WTC11 (cell line): ENCODE measurements at regions of chr1 and their contacts with region 1.

Region 1: GRCh38 chr1:23634842-23635651 is 56.6 kb upstream of the RPL11 start:
- DNase-seq: peak; percentile 61
- ATAC-seq: peak; percentile 70
- H3K4me3 Mint-ChIP-seq: no peak overlapping the region
- H3K27ac Mint-ChIP-seq: peak overlapping the region; percentile 13; the same call in 1 of the 2 replicates
- H3K4me1 Mint-ChIP-seq: peaks cover 28% of the 10 kb centered on the region
- H3K27me3 Mint-ChIP-seq: no peaks in the 10 kb centered on the region; the same call in 1 of the 2 replicates
- CTCF ChIP-seq: peak; percentile 82

Region 2: DNA sequence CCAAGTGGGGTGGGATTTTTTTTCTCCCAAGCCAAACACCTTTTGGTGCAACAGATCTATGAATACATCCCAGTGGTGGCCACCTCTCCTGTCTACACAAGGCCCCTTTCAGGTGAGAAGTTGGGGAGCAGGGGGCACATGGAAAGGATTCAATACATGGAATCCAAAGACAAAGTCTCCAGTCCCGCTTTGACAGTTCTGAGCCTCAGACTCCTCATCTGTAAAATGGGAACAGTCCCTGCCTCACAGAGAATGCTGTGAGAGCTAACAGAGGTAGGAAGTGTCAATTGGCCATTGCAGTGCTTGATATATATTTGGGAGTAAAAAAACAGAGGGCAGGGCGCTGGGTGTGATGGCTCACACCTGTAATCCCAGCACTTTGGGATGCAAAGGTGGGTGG is 238.7 kb before region 1 on chr1:
- CTCF ChIA-PET with region 1: no interaction called
- POLR2A ChIA-PET with region 1: no interaction called
- DNase-seq: no peak
- ATAC-seq: no peak
- H3K4me3 Mint-ChIP-seq: no peak overlapping the region
- H3K27ac Mint-ChIP-seq: no peak overlapping the region
- H3K4me1 Mint-ChIP-seq: peaks cover 19% of the 10 kb centered on the region
- H3K27me3 Mint-ChIP-seq: no peaks in the 10 kb centered on the region
- CTCF ChIP-seq: no peak

Region 3: DNA sequence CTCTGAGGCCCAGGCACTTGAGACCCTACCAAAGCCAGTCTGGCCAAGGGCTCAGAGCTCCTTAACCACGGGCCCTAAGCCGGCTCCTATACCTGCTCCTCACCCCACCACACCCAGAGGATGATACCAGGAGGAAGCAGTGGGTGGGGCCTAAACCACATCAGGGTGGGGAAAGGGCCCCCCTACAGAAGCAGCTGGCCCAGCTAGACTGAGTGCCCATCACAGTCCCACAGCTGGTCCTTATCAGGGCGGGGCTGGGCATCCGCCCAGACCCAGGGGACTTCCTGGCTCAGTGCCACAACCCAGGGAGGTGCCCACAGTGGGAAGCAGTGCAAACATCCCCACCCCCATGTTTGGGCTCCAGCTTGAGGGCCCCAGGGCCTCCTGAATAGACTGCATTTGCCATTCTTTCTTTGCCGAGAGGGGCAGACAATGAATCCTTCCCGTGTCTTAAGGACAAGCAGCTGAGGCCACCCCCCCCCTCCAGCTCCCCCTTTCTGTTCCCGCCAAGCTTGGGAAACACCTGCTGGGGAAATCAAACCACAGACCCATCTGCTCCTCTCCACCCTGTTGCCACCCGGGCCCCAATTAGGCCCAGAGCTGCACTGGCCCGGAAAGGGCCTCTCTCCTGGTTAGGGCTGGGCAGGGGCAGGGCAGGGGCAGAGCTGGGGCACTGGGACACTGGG is 110.2 kb before region 1 on chr1:
- CTCF ChIA-PET with region 1: interaction called, 19 read pairs
- POLR2A ChIA-PET with region 1: no interaction called
- DNase-seq: no peak
- ATAC-seq: no peak; the same call in 1 of the 2 replicates
- H3K4me3 Mint-ChIP-seq: no peak overlapping the region
- H3K27ac Mint-ChIP-seq: no peak overlapping the region
- H3K4me1 Mint-ChIP-seq: peaks cover 15% of the 10 kb centered on the region
- H3K27me3 Mint-ChIP-seq: peaks cover 15% of the 10 kb centered on the region
- CTCF ChIP-seq: no peak

Region 4: GRCh38 chr1:23559136-23559984 is 75.7 kb before region 1 on chr1 and contains the start of gene ID3:
- CTCF ChIA-PET with region 1: interaction called, 341 read pairs
- POLR2A ChIA-PET with region 1: interaction called, 26 read pairs
- DNase-seq: peak; percentile 96
- ATAC-seq: peak; percentile 47
- H3K4me3 Mint-ChIP-seq: peak within 1 kb of the TSS; percentile 94
- H3K27ac Mint-ChIP-seq: peak within 1 kb of the TSS; percentile 98
- H3K4me1 Mint-ChIP-seq: peaks cover 74% of the 10 kb centered on the region
- H3K27me3 Mint-ChIP-seq: no peaks in the 10 kb centered on the region
- CTCF ChIP-seq: no peak
- total RNA-seq, gene ID3: 168 to 278 TPM (median 273 TPM) in 3 replicates

Region 5: GRCh38 chr1:23591460-23592208 is 43.4 kb before region 1 on chr1:
- CTCF ChIA-PET with region 1: interaction called, 70 read pairs
- POLR2A ChIA-PET with region 1: no interaction called
- DNase-seq: no peak
- ATAC-seq: peak; percentile 25; the same call in 1 of the 2 replicates
- H3K4me3 Mint-ChIP-seq: no peak overlapping the region
- H3K27ac Mint-ChIP-seq: peak overlapping the region; percentile 2
- H3K4me1 Mint-ChIP-seq: peaks cover 73% of the 10 kb centered on the region
- H3K27me3 Mint-ChIP-seq: peaks cover 3% of the 10 kb centered on the region; the same call in 1 of the 2 replicates
- CTCF ChIP-seq: no peak

Region 6: GRCh38 chr1:23619299-23620188 is 15.5 kb before region 1 on chr1:
- CTCF ChIA-PET with region 1: interaction called, 40 read pairs
- POLR2A ChIA-PET with region 1: interaction called, 6 read pairs
- DNase-seq: peak; percentile 71
- ATAC-seq: peak; percentile 91
- H3K4me3 Mint-ChIP-seq: peak overlapping the region; percentile 69
- H3K27ac Mint-ChIP-seq: peak overlapping the region; percentile 72; the same call in 1 of the 2 replicates
- H3K4me1 Mint-ChIP-seq: peaks cover 32% of the 10 kb centered on the region
- H3K27me3 Mint-ChIP-seq: peaks cover 32% of the 10 kb centered on the region
- CTCF ChIP-seq: no peak

Region 7: GRCh38 chr1:23664837-23665795 is 30.1 kb after region 1 on chr1:
- CTCF ChIA-PET with region 1: interaction called, 10 read pairs
- POLR2A ChIA-PET with region 1: no interaction called
- DNase-seq: peak; percentile 16
- ATAC-seq: peak; percentile 56
- H3K4me3 Mint-ChIP-seq: no peak overlapping the region
- H3K27ac Mint-ChIP-seq: no peak overlapping the region
- H3K4me1 Mint-ChIP-seq: peaks cover 3% of the 10 kb centered on the region; the same call in 1 of the 2 replicates
- H3K27me3 Mint-ChIP-seq: no peaks in the 10 kb centered on the region
- CTCF ChIP-seq: peak; percentile 62